Posterior vena cava (tissue), 2 donors: ENCODE measurements at regions of chr9 and their contacts with region 1.

Region 1: GRCh38 chr9:123772967-123773366 is 157.0 kb downstream of the DENND1A start:
- DNase-seq: no peak

Region 2: DNA sequence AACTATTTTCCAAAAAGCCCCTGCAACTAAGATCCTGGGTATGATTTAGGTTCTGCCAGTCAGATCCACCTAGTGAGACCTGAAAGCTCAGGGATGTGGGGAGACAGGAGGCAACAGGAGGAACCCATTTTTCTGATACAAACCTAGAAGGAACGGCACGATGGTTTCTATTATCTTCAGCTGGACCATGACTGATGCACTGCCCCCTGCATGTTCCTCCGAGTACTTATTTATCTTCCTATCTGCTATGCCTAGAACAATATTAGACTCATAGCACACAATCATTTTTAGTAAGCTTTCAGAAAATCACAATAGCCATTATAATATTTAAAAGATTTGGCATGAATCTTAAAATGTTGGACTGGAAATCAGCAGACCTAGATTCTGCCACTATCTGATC is 36.0 kb after region 1 on chr9:
- intact Hi-C with region 1: loop called in 1 of 2 experiments (anchors 1 kb)
- DNase-seq: no peak

Region 3: GRCh38 chr9:123912167-123912897 is 139.4 kb after region 1 on chr9:
- intact Hi-C with region 1: no loop called
- DNase-seq: no peak